ENCODE measurements at regions of chr11 and their contacts with region 1.

Region 1: DNA sequence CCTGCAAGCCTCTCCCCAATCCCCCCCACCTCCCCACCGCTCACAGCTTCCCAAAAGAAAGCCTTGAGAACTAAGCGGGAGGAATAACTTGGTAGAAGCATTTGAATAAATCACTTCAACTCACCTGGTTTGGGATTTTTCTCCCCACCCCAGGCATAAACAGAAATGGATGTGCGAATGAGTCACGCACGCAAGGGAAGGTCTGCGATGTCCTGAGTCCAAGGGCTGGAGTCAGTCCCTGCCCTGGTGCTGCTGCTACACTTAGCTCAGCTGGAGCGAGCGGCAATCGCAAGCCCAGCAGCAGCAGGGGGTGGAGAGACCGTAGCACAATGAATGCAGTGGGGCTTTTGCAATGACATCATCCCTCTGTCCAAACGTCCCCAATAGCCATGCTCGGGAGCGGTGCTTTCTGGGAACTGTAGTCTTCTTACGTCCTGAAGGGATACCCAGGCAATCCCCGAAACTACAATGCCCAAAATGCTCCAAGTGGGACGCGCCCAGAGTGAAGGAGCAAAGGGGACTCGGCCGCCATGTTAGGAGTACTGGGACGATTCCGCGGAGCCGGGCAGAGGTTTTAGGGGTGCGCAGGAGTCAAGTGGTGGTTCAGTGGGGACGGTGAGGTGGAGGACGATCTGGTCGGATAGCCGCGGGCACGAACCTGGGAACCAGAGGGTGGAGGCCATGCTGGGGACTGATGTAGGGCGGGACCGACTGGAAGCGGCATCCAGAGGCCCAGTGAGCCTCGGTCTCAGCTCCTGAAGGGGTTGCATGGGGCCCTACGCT is at the start of gene RAB30:
- DNase-seq: peak; percentile 93
- H3K4me3 Mint-ChIP-seq: no peak within 1 kb of the TSS
- H3K27ac Mint-ChIP-seq: no peak within 1 kb of the TSS
- H3K4me1 Mint-ChIP-seq: peaks cover 41% of the 10 kb centered on the region
- H3K27me3 Mint-ChIP-seq: no peaks in the 10 kb centered on the region
- total RNA-seq, gene RAB30: 29.1 and 31.5 TPM in 2 replicates

Region 2: GRCh38 chr11:82867495-82868082 is 204.2 kb before region 1 on chr11:
- intact Hi-C with region 1: loop called (anchors 1 kb)
- DNase-seq: peak; percentile 49
- H3K4me3 Mint-ChIP-seq: no peak overlapping the region
- H3K27ac Mint-ChIP-seq: no peak overlapping the region
- H3K4me1 Mint-ChIP-seq: peaks cover 16% of the 10 kb centered on the region
- H3K27me3 Mint-ChIP-seq: peaks cover 7% of the 10 kb centered on the region

Region 3: DNA sequence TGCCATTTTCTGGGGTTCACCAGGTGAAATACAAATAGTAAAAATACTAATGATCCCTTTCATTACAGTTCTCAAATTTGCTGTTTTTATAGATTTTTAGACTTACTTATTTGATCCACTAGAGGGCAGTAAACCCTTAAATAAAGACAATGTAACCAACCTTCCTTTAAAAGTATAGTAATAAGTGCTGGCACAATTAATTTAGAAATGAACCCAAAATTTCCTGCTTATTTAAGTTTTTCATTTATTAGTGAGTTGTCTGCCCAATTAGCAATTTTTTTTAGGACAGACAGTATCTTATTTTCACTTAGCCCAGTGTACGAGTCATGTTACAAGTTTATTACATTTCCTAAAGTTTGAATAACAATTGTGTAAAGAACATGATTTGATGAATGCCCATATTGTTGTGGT is 165.5 kb before region 1 on chr11:
- intact Hi-C with region 1: loop called (anchors 1 kb)
- DNase-seq: no peak
- H3K4me3 Mint-ChIP-seq: no peak overlapping the region
- H3K27ac Mint-ChIP-seq: no peak overlapping the region
- H3K4me1 Mint-ChIP-seq: peaks cover 51% of the 10 kb centered on the region
- H3K27me3 Mint-ChIP-seq: no peaks in the 10 kb centered on the region

Region 4: GRCh38 chr11:82959987-82960778 is 111.6 kb before region 1 on chr11:
- intact Hi-C with region 1: loop called (anchors 1 kb)
- DNase-seq: peak; percentile 47
- H3K4me3 Mint-ChIP-seq: peak overlapping the region; percentile 34
- H3K27ac Mint-ChIP-seq: peak overlapping the region; percentile 31
- H3K4me1 Mint-ChIP-seq: peaks cover 52% of the 10 kb centered on the region
- H3K27me3 Mint-ChIP-seq: peaks cover 5% of the 10 kb centered on the region

Region 5: DNA sequence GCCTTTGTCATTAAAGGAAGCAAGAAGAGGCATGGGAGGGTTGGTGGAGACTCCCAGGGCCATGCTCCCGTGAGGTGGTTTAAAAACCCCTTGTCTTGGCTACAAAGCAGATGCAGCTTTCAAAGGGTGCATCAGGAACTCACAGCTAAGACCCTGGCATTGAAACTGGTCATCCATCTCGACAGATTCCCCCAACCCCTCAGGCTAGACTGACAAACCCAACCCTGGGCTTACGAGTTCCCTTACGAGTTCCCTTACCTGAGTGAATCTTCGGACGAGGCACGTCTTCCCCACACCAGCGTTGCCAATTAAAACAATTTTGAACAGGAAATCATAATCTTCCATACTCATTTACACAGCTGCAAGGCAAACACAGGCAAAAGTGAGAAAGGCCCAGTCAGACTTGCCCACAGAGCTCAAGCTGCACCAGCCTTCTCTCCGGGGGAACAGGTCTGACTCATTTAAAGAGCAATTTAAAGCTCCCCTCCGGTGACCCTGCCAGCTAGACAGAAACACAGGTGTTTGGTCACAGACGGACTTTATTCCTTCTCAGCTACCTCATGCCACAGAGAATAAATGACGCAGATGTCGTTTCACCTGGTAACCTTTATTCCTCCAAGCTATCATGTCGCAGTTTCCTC is 74.7 kb before region 1 on chr11:
- intact Hi-C with region 1: loop called (anchors 1 kb)
- DNase-seq: no peak
- H3K4me3 Mint-ChIP-seq: no peak overlapping the region
- H3K27ac Mint-ChIP-seq: peak overlapping the region; percentile 80
- H3K4me1 Mint-ChIP-seq: peaks cover 78% of the 10 kb centered on the region
- H3K27me3 Mint-ChIP-seq: no peaks in the 10 kb centered on the region

Region 6: GRCh38 chr11:83051760-83052671 is 19.7 kb before region 1 on chr11:
- intact Hi-C with region 1: no loop called
- DNase-seq: no peak
- H3K4me3 Mint-ChIP-seq: no peak overlapping the region
- H3K27ac Mint-ChIP-seq: peak overlapping the region; percentile 12
- H3K4me1 Mint-ChIP-seq: peaks cover 63% of the 10 kb centered on the region
- H3K27me3 Mint-ChIP-seq: no peaks in the 10 kb centered on the region

Region 7: DNA sequence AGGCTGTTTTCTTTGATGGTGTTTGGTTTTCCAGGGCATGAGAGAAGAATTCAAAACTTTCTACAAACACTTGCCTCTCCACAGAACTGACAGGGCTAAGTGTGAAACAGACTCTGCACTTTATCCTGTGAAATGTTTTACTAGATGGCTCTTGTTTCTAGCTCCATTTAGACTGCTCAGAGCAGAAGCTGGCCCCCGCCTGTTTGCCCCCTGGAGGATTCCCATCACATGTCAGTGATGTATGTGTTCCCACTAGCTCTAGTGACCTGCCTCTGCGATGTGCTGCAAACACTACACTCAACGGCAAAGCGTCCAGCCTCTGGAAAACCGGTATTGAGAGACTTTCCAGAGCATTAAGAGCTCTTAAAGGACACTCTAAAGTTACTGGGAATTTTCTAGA is 43.8 kb after region 1 on chr11:
- intact Hi-C with region 1: loop called (anchors 5 kb)
- DNase-seq: no peak
- H3K4me3 Mint-ChIP-seq: no peak overlapping the region
- H3K27ac Mint-ChIP-seq: no peak overlapping the region
- H3K4me1 Mint-ChIP-seq: peaks cover 35% of the 10 kb centered on the region
- H3K27me3 Mint-ChIP-seq: no peaks in the 10 kb centered on the region

Region 8: DNA sequence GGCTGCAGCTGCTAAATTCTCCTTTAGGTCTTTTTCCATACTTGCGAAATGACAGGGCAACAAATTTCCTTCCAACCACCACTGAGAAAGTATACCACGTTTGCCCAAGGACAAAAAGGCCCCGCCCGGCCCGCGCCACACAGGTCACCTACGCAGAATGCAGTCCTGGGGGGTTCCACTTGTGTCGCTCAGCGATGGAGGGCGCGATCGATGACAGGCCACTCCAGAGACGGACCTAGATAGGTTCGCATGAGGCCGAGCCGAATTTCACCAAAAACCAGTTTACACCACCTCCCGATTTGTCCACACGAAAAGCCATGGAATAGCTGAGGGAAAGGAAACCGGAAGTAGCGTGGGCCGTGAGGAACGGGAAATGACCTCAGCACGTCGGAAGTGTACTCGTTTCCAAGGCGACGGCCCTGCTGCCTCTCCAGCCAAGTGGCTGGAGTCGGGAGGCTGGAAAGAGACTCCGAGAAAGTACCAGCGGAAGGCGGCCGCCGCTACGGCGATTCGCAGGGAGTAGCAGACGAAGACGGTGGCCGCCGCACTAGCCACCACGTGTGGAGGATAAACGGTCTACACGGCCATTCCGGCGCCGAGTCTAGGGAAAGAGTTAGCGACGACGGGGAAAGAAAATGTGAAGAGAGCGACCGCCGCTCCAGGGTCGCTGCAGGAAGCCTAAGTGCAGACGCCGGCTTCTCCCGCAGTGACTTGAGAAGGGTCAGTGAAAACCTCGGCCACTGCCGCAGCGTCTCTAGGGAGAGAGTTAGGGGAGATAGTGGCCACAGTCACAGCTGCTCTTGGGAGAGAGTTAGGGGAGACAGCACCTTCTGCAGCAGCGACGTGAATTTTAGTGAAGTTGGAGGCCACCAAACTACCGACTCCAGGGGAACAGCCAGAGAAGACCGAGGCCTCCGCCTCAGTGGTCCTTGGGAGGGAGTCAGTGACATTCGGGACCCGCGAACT is 121.8 kb after region 1 on chr11 and contains the start of gene ANKRD42:
- intact Hi-C with region 1: loop called (anchors 1 kb)
- DNase-seq: peak; percentile 82
- H3K4me3 Mint-ChIP-seq: peak within 1 kb of the TSS; percentile 99
- H3K27ac Mint-ChIP-seq: peak within 1 kb of the TSS; percentile 92
- H3K4me1 Mint-ChIP-seq: peaks cover 21% of the 10 kb centered on the region
- H3K27me3 Mint-ChIP-seq: no peaks in the 10 kb centered on the region
- total RNA-seq, gene ANKRD42: 3.7 TPM in 2 replicates